CD8-positive, alpha-beta T cell (primary cell): ENCODE measurements at regions of chr3 and their contacts with region 1.

Region 1: DNA sequence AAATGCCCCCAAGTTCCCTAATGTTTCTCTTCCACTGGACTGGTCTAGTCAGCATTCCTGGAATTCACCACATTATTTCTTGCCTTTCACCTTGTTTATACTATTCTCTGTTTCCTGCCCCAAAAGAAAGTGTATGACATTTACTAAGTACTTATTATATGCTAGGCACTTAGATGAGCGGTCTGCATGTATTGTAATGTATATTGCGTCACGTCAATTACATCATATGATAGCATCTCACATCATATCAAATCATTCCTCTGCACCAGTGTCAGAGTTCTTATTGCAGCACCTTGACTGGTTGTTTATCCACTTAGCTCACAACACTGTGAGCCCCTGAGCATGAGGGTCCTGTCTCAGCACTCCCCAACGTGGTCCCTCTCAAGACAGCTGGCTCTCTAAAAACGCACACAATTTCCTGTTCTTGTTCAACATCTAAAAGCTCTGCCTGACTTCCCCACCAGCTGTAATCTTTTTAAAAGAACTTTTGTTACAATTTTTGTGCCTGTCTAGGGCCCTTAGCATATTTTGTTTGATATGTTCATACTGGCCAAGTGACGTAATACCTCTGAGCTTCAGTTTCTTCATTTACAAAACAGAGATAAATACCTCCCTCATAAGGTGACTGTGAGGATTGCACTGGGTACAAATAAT is 58.8 kb downstream of the ARHGAP31 start:
- DNase-seq: peak in 3 of 9 experiments; percentile 20 to 76 (median 61)
- ATAC-seq: peak; percentile 80
- H3K4me3 ChIP-seq: no peak overlapping the region
- H3K4me3 Mint-ChIP-seq: no peak overlapping the region
- H3K27ac ChIP-seq: no peak overlapping the region
- H3K27ac Mint-ChIP-seq: peak overlapping the region; percentile 8
- H3K4me1 ChIP-seq: peaks cover 20% of the 10 kb centered on the region
- H3K4me1 Mint-ChIP-seq: peaks cover 20% of the 10 kb centered on the region
- H3K27me3 ChIP-seq: no peaks in the 10 kb centered on the region
- H3K27me3 Mint-ChIP-seq: no peaks in the 10 kb centered on the region
- CTCF ChIP-seq: peak; percentile 63

Region 2: GRCh38 chr3:119098619-119099222 is 254.3 kb before region 1 on chr3:
- CTCF ChIA-PET with region 1: no interaction called
- POLR2A ChIA-PET with region 1: no interaction called
- intact Hi-C with region 1: loop called in 1 of 2 experiments (anchors 2 kb)
- DNase-seq: peak in 3 of 9 experiments; percentile 11 to 64 (median 57)
- ATAC-seq: no peak
- H3K4me3 ChIP-seq: no peak overlapping the region
- H3K4me3 Mint-ChIP-seq: no peak overlapping the region
- H3K27ac ChIP-seq: no peak overlapping the region
- H3K27ac Mint-ChIP-seq: no peak overlapping the region
- H3K4me1 ChIP-seq: no peaks in the 10 kb centered on the region
- H3K4me1 Mint-ChIP-seq: no peaks in the 10 kb centered on the region
- H3K27me3 ChIP-seq: no peaks in the 10 kb centered on the region
- H3K27me3 Mint-ChIP-seq: peaks cover 5% of the 10 kb centered on the region
- CTCF ChIP-seq: peak; percentile 90

Region 3: DNA sequence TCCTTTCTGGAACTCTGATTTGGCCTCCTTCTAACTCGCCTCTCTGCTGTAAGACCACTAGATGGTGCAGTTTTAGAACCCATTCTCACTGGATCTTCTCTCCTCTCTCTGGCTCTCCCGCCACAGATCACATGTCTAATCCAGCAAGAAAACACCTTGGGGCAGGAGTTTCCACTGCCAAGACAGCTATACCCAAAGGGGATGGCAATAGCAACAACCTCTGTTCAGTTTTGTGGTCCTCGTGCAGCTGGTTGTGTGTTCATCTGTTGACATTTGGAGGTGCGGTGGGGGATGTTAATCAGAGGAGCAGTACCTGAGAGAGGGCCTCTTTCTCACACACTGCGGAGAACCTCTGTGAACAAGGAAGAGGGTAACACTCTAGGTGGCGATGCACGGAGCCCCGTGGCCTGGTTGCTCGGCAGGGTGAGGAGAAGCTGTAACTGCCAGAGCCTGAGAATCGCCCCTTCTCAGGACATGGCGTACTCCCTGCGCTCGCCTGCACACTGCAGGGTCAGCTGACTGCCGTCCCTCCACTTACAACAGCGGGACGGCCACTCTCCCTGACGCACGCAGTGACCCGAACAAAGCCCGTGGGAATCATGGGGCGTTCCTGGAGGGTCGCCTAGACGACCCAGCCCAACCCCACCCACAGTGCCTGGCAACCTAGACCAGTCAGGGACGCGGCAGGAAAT is 207.3 kb before region 1 on chr3 and contains the start of gene TEX55:
- CTCF ChIA-PET with region 1: interaction called, 3 read pairs
- POLR2A ChIA-PET with region 1: no interaction called
- intact Hi-C with region 1: loop called (anchors 2 to 5 kb)
- DNase-seq: peak in 2 of 9 experiments; percentile 25 to 39
- ATAC-seq: peak; percentile 46
- H3K4me3 ChIP-seq: no peak within 1 kb of the TSS
- H3K4me3 Mint-ChIP-seq: no peak within 1 kb of the TSS
- H3K27ac ChIP-seq: no peak within 1 kb of the TSS
- H3K27ac Mint-ChIP-seq: no peak within 1 kb of the TSS
- H3K4me1 ChIP-seq: no peaks in the 10 kb centered on the region
- H3K4me1 Mint-ChIP-seq: peaks cover 2% of the 10 kb centered on the region
- H3K27me3 ChIP-seq: no peaks in the 10 kb centered on the region
- H3K27me3 Mint-ChIP-seq: no peaks in the 10 kb centered on the region
- CTCF ChIP-seq: peak; percentile 54
- total RNA-seq, gene TEX55: not detected

Region 4: DNA sequence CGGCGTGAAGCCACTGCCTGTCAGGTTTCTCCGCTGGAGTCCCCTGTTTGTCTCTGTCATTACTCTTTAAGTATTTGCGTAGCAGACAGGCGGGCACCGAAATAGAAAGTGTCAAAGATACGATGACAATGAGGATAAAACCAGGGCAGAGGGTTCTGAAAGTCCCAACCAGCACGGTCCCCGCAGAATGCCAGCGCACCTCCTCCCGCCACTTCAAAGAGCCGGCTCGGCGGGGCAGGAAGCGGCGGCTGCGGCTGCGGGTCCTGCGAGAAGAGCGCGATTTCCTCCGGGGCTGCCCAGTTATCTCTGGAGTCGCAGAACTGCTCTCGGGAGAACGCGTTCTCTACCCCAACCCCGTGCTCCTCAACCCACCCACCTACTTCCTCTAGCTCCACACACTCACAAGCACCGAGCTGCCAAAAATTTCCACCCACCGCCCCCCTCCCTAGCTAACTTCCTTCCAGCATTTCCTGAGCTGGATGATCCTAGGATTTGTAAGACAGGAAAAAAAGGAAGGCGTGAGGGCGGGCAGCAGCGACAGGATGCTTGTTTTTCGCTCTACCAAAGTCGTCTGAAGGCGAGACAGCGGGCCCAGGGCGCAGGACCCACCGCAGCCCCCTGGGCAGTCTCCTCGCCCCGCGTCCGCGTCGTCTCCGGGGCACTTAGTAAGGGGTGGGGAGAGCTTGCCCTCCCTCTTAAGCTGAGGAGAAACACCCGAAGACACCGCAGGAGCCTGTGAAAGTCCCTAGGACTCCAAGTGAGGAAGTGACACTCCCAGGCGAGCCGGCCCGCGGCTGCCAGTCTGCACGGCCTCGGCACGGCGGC is 58.9 kb before region 1 on chr3 and contains the start of gene ARHGAP31:
- CTCF ChIA-PET with region 1: interaction called, 9 read pairs
- POLR2A ChIA-PET with region 1: interaction called, 4 read pairs
- intact Hi-C with region 1: loop called in 1 of 2 experiments (anchors 5 kb)
- DNase-seq: peak; percentile 71 to 96 (median 86)
- ATAC-seq: peak; percentile 64
- H3K4me3 ChIP-seq: peak within 1 kb of the TSS; percentile 61 to 82
- H3K4me3 Mint-ChIP-seq: peak within 1 kb of the TSS; percentile 95
- H3K27ac ChIP-seq: peak within 1 kb of the TSS; percentile 58 to 84
- H3K27ac Mint-ChIP-seq: peak within 1 kb of the TSS; percentile 98
- H3K4me1 ChIP-seq: peaks cover 30% of the 10 kb centered on the region
- H3K4me1 Mint-ChIP-seq: peaks cover 55% of the 10 kb centered on the region
- H3K27me3 ChIP-seq: no peaks in the 10 kb centered on the region
- H3K27me3 Mint-ChIP-seq: no peaks in the 10 kb centered on the region
- CTCF ChIP-seq: no peak
- total RNA-seq, gene ARHGAP31: 1.00 to 1.1 TPM

Region 5: GRCh38 chr3:119380697-119381096 is 27.7 kb after region 1 on chr3:
- CTCF ChIA-PET with region 1: no interaction called
- POLR2A ChIA-PET with region 1: no interaction called
- intact Hi-C with region 1: no loop called
- DNase-seq: no peak
- ATAC-seq: no peak
- H3K4me3 ChIP-seq: no peak overlapping the region
- H3K4me3 Mint-ChIP-seq: no peak overlapping the region
- H3K27ac ChIP-seq: no peak overlapping the region
- H3K27ac Mint-ChIP-seq: no peak overlapping the region
- H3K4me1 ChIP-seq: no peaks in the 10 kb centered on the region
- H3K4me1 Mint-ChIP-seq: no peaks in the 10 kb centered on the region
- H3K27me3 ChIP-seq: no peaks in the 10 kb centered on the region
- H3K27me3 Mint-ChIP-seq: no peaks in the 10 kb centered on the region
- CTCF ChIP-seq: no peak

Region 6: DNA sequence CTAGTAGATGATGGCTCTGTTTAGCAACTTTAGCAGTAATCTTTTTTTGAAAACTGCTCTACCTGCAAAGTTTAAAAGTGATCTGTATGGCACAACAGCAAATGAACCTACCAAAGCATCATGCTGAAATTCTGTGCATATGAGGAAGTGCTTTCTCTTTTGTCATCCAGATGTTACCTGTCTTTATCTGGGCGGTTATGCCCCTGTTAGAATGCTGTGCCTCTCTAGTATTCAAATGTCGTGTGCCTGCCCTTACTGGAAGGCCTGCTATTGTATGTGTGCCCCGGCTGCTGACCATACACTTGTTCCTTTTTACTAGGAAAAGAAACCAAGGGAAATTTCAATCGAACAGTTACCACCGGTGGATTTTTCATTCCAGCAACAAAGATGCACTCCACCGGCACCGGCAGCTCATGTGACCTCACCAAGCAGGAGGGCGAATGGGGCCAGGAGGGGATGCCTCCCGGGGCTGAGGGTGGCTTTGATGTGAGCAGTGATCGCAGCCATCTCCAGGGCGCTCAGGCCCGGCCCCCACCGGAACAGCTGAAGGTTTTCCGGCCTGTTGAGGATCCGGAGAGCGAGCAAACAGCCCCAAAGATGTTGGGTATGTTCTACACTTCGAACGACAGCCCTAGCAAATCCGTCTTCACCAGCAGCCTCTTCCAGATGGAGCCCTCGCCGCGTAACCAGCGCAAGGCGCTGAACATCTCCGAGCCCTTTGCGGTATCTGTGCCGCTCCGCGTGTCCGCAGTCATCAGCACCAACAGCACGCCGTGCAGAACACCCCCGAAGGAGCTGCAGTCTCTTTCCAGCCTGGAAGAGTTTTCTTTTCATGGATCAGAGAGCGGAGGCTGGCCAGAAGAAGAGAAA is 48.8 kb after region 1 on chr3:
- CTCF ChIA-PET with region 1: no interaction called
- POLR2A ChIA-PET with region 1: no interaction called
- intact Hi-C with region 1: no loop called
- DNase-seq: no peak
- ATAC-seq: no peak
- H3K4me3 ChIP-seq: no peak overlapping the region
- H3K4me3 Mint-ChIP-seq: no peak overlapping the region
- H3K27ac ChIP-seq: no peak overlapping the region
- H3K27ac Mint-ChIP-seq: no peak overlapping the region
- H3K4me1 ChIP-seq: no peaks in the 10 kb centered on the region
- H3K4me1 Mint-ChIP-seq: no peaks in the 10 kb centered on the region
- H3K27me3 ChIP-seq: no peaks in the 10 kb centered on the region
- H3K27me3 Mint-ChIP-seq: no peaks in the 10 kb centered on the region
- CTCF ChIP-seq: no peak